ENCODE measurements at regions of chr6 and their contacts with region 1.

Region 1: DNA sequence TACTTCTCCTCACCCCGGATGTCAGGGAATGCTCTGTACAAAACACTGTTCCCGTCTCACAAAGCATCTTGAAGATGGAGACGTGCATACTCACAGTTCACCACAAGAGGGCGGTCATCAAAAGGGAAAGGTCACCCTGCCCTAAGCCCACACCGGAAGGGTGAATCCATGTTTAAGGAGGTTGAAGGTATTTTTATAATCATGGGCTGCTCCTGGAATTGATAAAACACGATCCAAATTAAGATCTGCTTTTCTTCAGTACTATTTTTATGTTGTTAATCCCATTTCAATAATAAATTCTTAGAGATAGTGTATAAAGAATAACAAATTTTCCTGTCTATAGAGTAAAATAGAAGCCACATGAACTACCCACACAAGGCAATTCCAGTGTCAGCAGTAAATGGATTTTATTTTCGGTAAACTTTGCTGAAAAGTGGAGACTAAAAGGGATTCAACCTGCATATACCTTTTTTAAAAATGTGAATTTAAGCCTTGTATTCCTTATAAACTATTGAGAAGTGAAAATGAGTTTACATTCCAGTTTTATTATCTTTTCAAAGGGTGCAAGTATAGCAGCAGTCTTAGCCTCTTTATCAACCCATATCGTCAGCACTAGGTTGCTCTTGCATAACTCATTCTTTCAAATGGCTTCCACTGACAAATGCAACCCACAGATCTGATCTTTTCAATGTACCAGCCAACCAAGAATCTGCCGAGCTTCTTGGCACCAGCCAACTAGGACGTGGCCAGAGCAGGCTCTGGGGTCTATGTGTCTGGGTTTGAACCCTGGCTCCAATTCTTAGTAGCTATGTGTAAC is 79.7 kb upstream of the MBOAT1 start:
- DNase-seq: peak; percentile 78
- ATAC-seq: peak; percentile 86
- H3K4me3 ChIP-seq: no peak overlapping the region
- H3K4me3 Mint-ChIP-seq: peak overlapping the region; percentile 49
- H3K27ac ChIP-seq: no peak overlapping the region
- H3K27ac Mint-ChIP-seq: no peak overlapping the region
- H3K4me1 ChIP-seq: no peaks in the 10 kb centered on the region
- H3K4me1 Mint-ChIP-seq: peaks cover 6% of the 10 kb centered on the region
- H3K27me3 ChIP-seq: no peaks in the 10 kb centered on the region
- H3K27me3 Mint-ChIP-seq: no peaks in the 10 kb centered on the region
- CTCF ChIP-seq: peak; percentile 97

Region 2: DNA sequence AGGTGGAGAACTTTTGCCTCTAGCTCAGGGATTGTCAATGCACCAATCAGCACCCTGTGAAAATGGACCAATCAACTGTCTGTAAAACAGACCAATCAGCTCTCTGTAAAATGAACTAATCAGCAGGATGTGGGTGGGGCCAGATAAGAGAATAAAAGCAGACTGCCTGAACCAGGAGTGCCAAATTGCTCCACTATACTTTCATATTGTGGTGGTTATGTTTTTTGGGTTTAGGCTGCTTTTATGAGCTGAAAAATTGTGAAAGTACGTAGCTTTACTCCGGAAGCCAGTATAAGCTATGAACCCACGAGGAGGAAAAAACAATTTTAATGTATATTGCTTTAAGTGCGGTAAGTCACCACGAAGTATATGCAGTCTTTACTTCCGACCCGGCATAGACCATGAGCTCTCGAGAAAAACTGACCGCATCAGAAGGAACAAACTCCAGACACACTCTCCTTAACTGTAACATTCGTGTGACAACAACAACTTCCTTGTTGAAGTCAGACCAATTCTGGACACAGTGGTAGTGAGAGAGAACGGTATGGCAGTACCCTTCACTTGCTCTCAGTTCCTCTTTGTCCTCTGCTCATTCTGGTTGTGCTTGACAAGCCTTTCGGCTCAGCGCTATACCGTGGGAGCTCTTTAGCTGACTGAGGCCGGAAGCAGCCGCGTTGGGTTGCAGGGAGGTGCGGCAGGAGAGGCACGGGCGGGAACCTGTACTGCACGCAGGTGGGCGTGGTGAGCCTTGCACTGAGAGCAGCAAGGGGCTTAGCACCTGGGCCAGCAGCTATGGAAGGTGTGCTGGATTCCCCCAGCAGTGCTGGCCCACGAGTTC is 27.8 kb after region 1 on chr6:
- CTCF ChIA-PET with region 1: interaction called, 5 read pairs
- POLR2A ChIA-PET with region 1: no interaction called
- intact Hi-C with region 1: loop called (anchors 1 kb)
- DNase-seq: peak; percentile 94
- ATAC-seq: peak; percentile 96
- H3K4me3 ChIP-seq: peak overlapping the region; percentile 59 to 65 (median 62)
- H3K4me3 Mint-ChIP-seq: peak overlapping the region; percentile 87
- H3K27ac ChIP-seq: peak overlapping the region; percentile 96
- H3K27ac Mint-ChIP-seq: peak overlapping the region; percentile 95
- H3K4me1 ChIP-seq: peaks cover 7 to 14% of the 10 kb centered on the region in 2 donors
- H3K4me1 Mint-ChIP-seq: peaks cover 16% of the 10 kb centered on the region
- H3K27me3 ChIP-seq: no peaks in the 10 kb centered on the region
- H3K27me3 Mint-ChIP-seq: peaks cover 5% of the 10 kb centered on the region
- CTCF ChIP-seq: no peak